CD8-positive, alpha-beta T cell (primary cell): ENCODE measurements at regions of chr7 and their contacts with region 1.

Region 1: DNA sequence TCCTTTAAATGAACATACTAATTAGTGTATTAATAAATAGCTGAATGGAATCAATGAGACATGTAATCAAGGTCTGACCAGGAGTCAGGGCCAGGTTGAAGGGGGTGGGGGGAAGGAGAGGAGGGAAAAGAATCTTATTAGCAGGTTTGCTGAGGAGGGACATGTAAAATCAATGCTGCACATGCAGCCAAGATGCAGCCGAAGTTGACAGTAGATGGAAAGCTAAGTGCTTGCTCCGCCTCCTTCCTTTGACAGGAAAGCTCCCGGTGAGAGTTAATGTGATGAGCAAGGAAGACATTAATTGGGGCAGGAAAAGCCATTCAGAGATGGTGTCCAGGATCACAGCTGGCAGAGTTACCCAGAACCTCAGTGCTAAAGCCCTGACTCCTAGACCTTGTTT is 24.4 kb downstream of the PLXNA4 start:
- DNase-seq: no peak
- ATAC-seq: no peak
- H3K4me3 ChIP-seq: no peak overlapping the region
- H3K4me3 Mint-ChIP-seq: no peak overlapping the region
- H3K27ac ChIP-seq: no peak overlapping the region
- H3K27ac Mint-ChIP-seq: no peak overlapping the region
- H3K4me1 ChIP-seq: no peaks in the 10 kb centered on the region
- H3K4me1 Mint-ChIP-seq: no peaks in the 10 kb centered on the region
- H3K27me3 ChIP-seq: no peaks in the 10 kb centered on the region
- H3K27me3 Mint-ChIP-seq: no peaks in the 10 kb centered on the region
- CTCF ChIP-seq: no peak

Region 2: GRCh38 chr7:132019703-132020102 is 532.2 kb before region 1 on chr7:
- CTCF ChIA-PET with region 1: no interaction called
- POLR2A ChIA-PET with region 1: no interaction called
- intact Hi-C with region 1: no loop called
- DNase-seq: no peak
- ATAC-seq: no peak
- H3K4me3 ChIP-seq: no peak overlapping the region
- H3K4me3 Mint-ChIP-seq: no peak overlapping the region
- H3K27ac ChIP-seq: no peak overlapping the region
- H3K27ac Mint-ChIP-seq: no peak overlapping the region
- H3K4me1 ChIP-seq: no peaks in the 10 kb centered on the region
- H3K4me1 Mint-ChIP-seq: no peaks in the 10 kb centered on the region
- H3K27me3 ChIP-seq: no peaks in the 10 kb centered on the region
- H3K27me3 Mint-ChIP-seq: peaks cover 4% of the 10 kb centered on the region
- CTCF ChIP-seq: no peak

Region 3: DNA sequence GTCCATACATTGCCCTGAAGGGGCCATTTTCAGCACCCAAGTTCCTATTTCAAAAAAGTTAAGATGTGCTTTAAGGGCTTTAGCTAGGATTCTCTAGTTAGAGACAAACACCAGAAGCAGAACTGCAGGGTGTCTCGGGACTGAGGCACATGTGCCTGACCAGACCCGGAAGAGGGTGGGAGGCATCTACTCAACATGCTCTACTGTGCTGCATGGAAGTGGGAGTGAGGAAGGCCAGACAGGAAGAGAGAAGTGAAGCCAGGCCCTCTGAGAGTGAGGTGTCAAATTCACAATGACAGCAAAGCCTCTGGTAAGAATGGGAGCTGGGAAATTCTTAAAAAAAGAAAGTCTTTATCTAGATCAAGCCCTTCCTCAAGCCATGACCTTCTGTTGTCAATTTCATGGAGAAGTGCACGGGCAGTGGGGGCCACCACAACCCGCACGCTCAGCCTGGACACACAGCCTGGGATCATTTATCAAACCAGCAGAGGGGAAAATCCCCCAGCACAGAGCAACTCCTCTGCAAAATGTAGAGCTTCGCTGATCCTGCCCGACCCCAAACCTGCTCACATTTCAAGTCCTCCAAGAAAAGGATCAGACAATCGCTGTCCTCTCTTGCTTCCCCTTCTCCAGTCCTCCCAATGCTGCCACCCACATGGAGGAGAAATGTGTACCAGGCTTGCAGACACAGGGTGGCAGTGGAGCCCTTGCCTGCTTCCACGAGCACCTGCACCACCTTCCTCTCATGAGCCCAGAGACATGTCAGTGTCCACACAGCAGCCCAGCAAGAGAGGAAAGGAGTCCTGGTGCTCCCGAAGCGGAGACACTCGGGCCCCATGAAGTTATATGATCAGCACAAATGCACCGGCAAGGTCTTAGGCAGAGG is 14.2 kb before region 1 on chr7:
- CTCF ChIA-PET with region 1: interaction called, 5 read pairs
- POLR2A ChIA-PET with region 1: no interaction called
- intact Hi-C with region 1: loop called in 1 of 2 experiments (anchors 2 kb)
- DNase-seq: no peak
- ATAC-seq: no peak
- H3K4me3 ChIP-seq: no peak overlapping the region
- H3K4me3 Mint-ChIP-seq: no peak overlapping the region
- H3K27ac ChIP-seq: no peak overlapping the region
- H3K27ac Mint-ChIP-seq: no peak overlapping the region
- H3K4me1 ChIP-seq: no peaks in the 10 kb centered on the region
- H3K4me1 Mint-ChIP-seq: no peaks in the 10 kb centered on the region
- H3K27me3 ChIP-seq: no peaks in the 10 kb centered on the region
- H3K27me3 Mint-ChIP-seq: no peaks in the 10 kb centered on the region
- CTCF ChIP-seq: no peak